Gastrocnemius medialis (tissue), 4 donors: ENCODE measurements at regions of chr4 and their contacts with region 1.

Region 1: DNA sequence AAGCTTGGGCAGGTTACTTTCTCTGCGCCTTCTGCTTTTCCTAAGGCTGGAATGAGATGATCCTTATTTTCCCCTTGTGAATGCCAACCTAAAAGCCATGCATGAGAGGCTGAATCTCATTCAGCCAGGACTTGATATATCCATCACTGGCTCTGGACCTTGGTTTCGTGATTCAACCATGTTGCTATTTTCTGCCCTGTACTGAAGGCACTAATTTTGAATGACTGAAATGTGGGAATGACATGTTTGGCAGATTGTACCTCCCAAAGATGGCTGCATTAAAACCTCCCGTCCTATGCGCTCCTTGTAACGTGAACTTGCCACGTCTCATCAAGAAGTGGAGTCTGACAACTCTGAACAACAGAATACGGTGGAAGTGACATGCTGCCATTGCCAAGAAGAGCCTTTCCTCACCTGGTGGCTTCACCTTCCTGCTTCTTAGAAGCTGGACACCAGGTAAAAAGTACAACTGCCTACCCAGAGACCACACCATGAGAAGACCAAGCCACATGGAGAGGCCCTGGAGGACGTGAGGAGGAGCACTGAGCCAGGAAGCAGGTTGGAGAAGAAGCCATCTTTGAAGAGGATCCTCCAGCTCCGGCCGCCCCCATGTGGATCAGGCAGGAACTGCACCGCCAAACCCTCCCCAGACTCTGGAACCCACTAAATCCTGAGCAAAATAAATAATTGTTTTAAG is 174.5 kb downstream of the NSUN7 start:
- DNase-seq: peak in 1 of 2 donors; percentile 36
- ATAC-seq: peak; percentile 44 to 63
- H3K4me3 ChIP-seq: no peak overlapping the region
- H3K27ac ChIP-seq: peak overlapping the region in 3 of 4 donors; percentile 12 to 45 (median 33)
- H3K4me1 ChIP-seq: peaks cover 3 to 9% of the 10 kb centered on the region in 2 donors
- H3K27me3 ChIP-seq: no peaks in the 10 kb centered on the region
- CTCF ChIP-seq: peak; percentile 82 to 91 (median 83)
- POLR2A ChIP-seq: no peak

Region 2: DNA sequence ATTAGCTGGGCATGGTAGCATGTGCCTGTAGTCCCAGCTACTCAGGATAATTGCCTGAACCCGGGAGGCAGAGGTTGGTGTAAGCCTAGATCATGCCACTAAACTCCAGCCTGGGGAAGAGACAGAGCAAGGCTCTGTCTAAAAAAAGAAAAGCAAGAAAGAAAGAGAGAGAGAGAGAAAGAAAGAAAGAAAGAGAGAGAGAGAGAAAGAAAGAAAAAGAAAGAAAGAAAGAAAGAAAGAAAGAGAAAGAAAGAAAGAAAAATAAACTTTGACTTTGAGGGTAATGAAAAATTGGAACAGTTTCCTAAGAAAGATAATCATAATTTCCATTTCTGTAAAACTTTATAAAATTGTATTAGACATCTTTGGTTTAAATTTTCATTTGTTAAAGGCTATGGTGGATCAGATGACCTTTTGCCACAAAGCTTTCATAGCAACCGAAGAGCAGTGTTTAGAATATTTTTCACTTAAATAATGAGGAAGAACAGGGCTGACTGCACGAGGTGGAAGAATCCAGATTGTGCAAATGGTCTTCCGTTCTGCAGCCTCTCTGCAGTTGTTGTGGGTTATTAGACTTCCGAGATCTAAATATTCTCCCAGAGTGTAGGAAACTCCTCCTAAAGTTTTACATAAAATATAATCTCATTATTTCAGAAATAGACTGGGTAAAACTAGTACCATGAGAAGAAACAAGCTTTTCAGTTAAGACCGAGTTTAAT is 350.5 kb before region 1 on chr4:
- in situ Hi-C with region 1: no loop called
- intact Hi-C with region 1: no loop called
- DNase-seq: no peak
- ATAC-seq: no peak
- H3K4me3 ChIP-seq: no peak overlapping the region
- H3K27ac ChIP-seq: no peak overlapping the region
- H3K4me1 ChIP-seq: no peaks in the 10 kb centered on the region
- H3K27me3 ChIP-seq: no peaks in the 10 kb centered on the region
- CTCF ChIP-seq: no peak
- POLR2A ChIP-seq: no peak

Region 3: DNA sequence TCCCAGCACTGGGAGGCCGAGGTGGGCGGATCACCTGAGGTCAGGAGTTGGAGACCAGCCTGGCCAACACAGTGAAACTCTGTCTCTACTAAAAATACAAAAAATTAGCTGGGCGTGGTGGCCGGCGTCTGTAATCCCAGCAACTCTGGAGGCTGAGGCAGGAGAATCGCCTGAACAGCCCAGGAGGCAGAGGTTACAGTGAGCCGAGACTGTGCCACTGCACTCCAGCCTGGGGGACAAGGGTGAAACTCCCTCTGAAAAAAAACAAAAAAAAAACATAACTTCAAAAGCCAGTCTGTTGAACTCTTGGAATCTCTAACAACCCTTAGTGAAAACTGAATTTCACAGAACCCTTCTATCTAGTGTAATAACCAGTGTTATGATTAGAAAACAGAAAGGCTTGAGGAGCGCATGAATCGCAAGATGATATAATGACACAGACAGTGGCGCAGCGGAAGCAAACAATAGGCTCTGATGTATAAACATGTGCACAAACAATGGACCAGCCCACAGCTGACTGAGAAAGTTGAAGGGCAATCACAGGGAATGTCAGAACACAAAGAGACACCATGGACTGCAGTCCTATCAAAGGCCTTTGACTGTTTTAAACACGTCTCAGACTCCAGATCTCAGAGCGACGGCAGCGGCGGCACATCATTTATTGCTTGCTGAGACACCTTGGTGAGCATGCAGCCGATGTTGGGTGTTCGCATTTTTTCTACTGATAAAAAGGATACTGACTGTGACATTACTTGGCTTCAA is 92.9 kb before region 1 on chr4:
- in situ Hi-C with region 1: no loop called
- intact Hi-C with region 1: no loop called
- DNase-seq: no peak
- ATAC-seq: no peak
- H3K4me3 ChIP-seq: no peak overlapping the region
- H3K27ac ChIP-seq: no peak overlapping the region
- H3K4me1 ChIP-seq: no peaks in the 10 kb centered on the region
- H3K27me3 ChIP-seq: no peaks in the 10 kb centered on the region
- CTCF ChIP-seq: no peak
- POLR2A ChIP-seq: no peak

Region 4: GRCh38 chr4:40887288-40888131 is 36.7 kb before region 1 on chr4:
- in situ Hi-C with region 1: no loop called
- intact Hi-C with region 1: no loop called
- DNase-seq: peak in 1 of 2 donors; percentile 21
- ATAC-seq: peak; percentile 64 to 82
- H3K4me3 ChIP-seq: no peak overlapping the region
- H3K27ac ChIP-seq: peak overlapping the region in 2 of 4 donors; percentile 7 to 19
- H3K4me1 ChIP-seq: no peaks in the 10 kb centered on the region
- H3K27me3 ChIP-seq: no peaks in the 10 kb centered on the region
- CTCF ChIP-seq: no peak
- POLR2A ChIP-seq: no peak

Region 5: GRCh38 chr4:40908702-40909362 is 15.4 kb before region 1 on chr4:
- in situ Hi-C with region 1: no loop called
- intact Hi-C with region 1: loop called (anchors 1 kb)
- DNase-seq: peak; percentile 30 to 66
- ATAC-seq: peak; percentile 88 to 96
- H3K4me3 ChIP-seq: no peak overlapping the region
- H3K27ac ChIP-seq: peak overlapping the region in 2 of 4 donors; percentile 25 to 28
- H3K4me1 ChIP-seq: peaks cover 14 to 16% of the 10 kb centered on the region in 2 donors
- H3K27me3 ChIP-seq: no peaks in the 10 kb centered on the region
- CTCF ChIP-seq: peak; percentile 77 to 97 (median 89)
- POLR2A ChIP-seq: no peak

Region 6: GRCh38 chr4:40976343-40976742 is 52.1 kb after region 1 on chr4:
- in situ Hi-C with region 1: no loop called
- intact Hi-C with region 1: loop called (anchors 5 kb)
- DNase-seq: no peak
- ATAC-seq: peak in 1 of 2 donors; percentile 58
- H3K4me3 ChIP-seq: no peak overlapping the region
- H3K27ac ChIP-seq: no peak overlapping the region
- H3K4me1 ChIP-seq: peaks cover 0 to 3% of the 10 kb centered on the region in 2 donors
- H3K27me3 ChIP-seq: no peaks in the 10 kb centered on the region
- CTCF ChIP-seq: peak; percentile 52 to 77 (median 63)
- POLR2A ChIP-seq: no peak

Region 7: GRCh38 chr4:40992472-40993295 is 68.4 kb after region 1 on chr4:
- in situ Hi-C with region 1: no loop called
- intact Hi-C with region 1: no loop called
- DNase-seq: no peak
- ATAC-seq: no peak
- H3K4me3 ChIP-seq: no peak overlapping the region
- H3K27ac ChIP-seq: no peak overlapping the region
- H3K4me1 ChIP-seq: no peaks in the 10 kb centered on the region
- H3K27me3 ChIP-seq: no peaks in the 10 kb centered on the region
- CTCF ChIP-seq: no peak
- POLR2A ChIP-seq: no peak